Activated B cell treated with CpG ODN at 0.5 μM for 24 hours (primary cell): ENCODE measurements at regions of chr12 and their contacts with region 1.

Region 1: DNA sequence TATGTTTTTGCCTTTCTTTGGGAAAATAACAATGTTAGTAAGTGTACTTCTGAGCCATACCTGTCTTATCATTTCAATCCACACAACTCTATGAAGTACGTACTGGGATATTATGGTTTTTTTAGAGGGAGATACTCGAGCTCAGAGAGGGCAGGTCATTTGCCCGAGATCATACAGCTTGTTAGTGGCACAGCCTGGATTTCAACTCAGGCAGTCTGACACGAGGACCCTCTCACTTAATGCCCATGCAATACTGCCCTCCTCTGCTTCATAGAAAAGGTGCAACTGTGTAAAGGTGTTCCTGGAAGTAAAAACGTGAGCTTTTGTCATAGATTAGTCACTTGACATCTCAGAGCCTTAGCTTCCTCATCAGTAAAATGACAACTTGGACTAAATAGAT is 128.0 kb downstream of the NDUFA12 start:
- DNase-seq: no peak
- ATAC-seq: peak; percentile 74
- H3K4me3 Mint-ChIP-seq: peak overlapping the region; percentile 74
- H3K27ac Mint-ChIP-seq: peak overlapping the region; percentile 46
- H3K4me1 Mint-ChIP-seq: peaks cover 38% of the 10 kb centered on the region
- H3K27me3 Mint-ChIP-seq: peaks cover 37% of the 10 kb centered on the region
- CTCF ChIP-seq: no peak

Region 2: GRCh38 chr12:94133964-94134795 is 741.3 kb before region 1 on chr12:
- CTCF ChIA-PET with region 1: interaction called, 4 read pairs
- POLR2A ChIA-PET with region 1: no interaction called
- intact Hi-C with region 1: loop called (anchors 1 kb)
- DNase-seq: no peak
- ATAC-seq: peak; percentile 97
- H3K4me3 Mint-ChIP-seq: no peak overlapping the region
- H3K27ac Mint-ChIP-seq: no peak overlapping the region
- H3K4me1 Mint-ChIP-seq: peaks cover 9% of the 10 kb centered on the region
- H3K27me3 Mint-ChIP-seq: no peaks in the 10 kb centered on the region
- CTCF ChIP-seq: peak; percentile 19

Region 3: GRCh38 chr12:94262228-94263010 is 613.1 kb before region 1 on chr12:
- CTCF ChIA-PET with region 1: no interaction called
- POLR2A ChIA-PET with region 1: no interaction called
- intact Hi-C with region 1: no loop called
- DNase-seq: peak; percentile 63
- ATAC-seq: peak; percentile 82
- H3K4me3 Mint-ChIP-seq: peak overlapping the region; percentile 97
- H3K27ac Mint-ChIP-seq: peak overlapping the region; percentile 99
- H3K4me1 Mint-ChIP-seq: peaks cover 64% of the 10 kb centered on the region
- H3K27me3 Mint-ChIP-seq: no peaks in the 10 kb centered on the region
- CTCF ChIP-seq: no peak

Region 4: DNA sequence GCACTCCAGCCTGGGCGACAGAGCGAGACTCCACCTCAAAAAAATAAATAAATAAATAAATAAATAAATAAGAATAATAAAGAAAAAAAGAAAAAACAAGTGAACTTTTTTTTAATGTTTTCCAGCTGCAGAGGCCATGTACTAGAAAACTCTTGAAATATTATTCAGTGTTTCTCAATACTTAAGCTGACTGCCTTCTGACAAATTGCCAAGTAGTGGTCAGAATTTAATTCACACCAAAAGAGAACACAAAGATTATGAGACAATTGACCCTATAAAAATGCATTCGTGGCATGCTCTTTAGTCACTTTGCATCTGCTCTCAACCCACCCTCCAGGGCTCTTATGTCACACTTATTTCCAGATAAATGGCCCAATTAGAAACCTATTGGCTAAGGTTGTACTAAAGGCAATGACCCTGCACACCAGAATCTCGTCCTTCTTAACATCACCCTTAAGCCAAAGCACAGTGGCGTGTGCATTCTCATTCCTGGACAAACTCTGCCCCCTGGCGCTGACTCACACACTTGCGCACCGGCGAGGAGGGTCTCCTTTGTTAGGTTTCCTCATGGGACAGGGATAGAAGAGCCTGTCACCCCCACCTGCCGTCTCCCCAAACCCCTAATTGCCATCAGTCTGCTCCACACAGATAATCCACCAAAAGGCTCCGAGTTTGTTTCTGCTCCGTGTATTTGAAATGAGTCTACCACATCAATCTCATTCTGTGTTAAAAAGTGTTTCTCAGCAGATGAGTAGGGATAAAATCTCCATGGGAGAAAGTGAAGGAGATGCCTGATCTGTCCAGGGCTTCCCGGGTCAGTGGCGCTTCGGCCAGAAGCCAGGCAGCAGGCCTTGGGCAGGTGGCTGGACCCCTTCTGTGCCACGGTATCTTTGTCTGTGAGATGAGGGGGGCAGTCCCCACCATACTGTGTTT is 342.8 kb before region 1 on chr12:
- CTCF ChIA-PET with region 1: interaction called, 11 read pairs
- POLR2A ChIA-PET with region 1: no interaction called
- intact Hi-C with region 1: no loop called
- DNase-seq: peak; percentile 63
- ATAC-seq: peak; percentile 88
- H3K4me3 Mint-ChIP-seq: no peak overlapping the region
- H3K27ac Mint-ChIP-seq: no peak overlapping the region
- H3K4me1 Mint-ChIP-seq: peaks cover 5% of the 10 kb centered on the region
- H3K27me3 Mint-ChIP-seq: peaks cover 9% of the 10 kb centered on the region
- CTCF ChIP-seq: no peak

Region 5: GRCh38 chr12:94649349-94650142 is 226.0 kb before region 1 on chr12:
- CTCF ChIA-PET with region 1: interaction called, 3 read pairs
- POLR2A ChIA-PET with region 1: interaction called, 3 read pairs
- intact Hi-C with region 1: loop called (anchors 1 kb)
- DNase-seq: peak; percentile 55
- ATAC-seq: peak; percentile 69
- H3K4me3 Mint-ChIP-seq: peak overlapping the region; percentile 86
- H3K27ac Mint-ChIP-seq: no peak overlapping the region
- H3K4me1 Mint-ChIP-seq: peaks cover 29% of the 10 kb centered on the region
- H3K27me3 Mint-ChIP-seq: no peaks in the 10 kb centered on the region
- CTCF ChIP-seq: no peak

Region 6: GRCh38 chr12:94710933-94711332 is 164.6 kb before region 1 on chr12:
- CTCF ChIA-PET with region 1: interaction called, 58 read pairs
- POLR2A ChIA-PET with region 1: interaction called, 10 read pairs
- intact Hi-C with region 1: loop called (anchors 1 kb)
- DNase-seq: no peak
- ATAC-seq: peak; percentile 69
- H3K4me3 Mint-ChIP-seq: no peak overlapping the region
- H3K27ac Mint-ChIP-seq: no peak overlapping the region
- H3K4me1 Mint-ChIP-seq: peaks cover 32% of the 10 kb centered on the region
- H3K27me3 Mint-ChIP-seq: no peaks in the 10 kb centered on the region
- CTCF ChIP-seq: no peak

Region 7: DNA sequence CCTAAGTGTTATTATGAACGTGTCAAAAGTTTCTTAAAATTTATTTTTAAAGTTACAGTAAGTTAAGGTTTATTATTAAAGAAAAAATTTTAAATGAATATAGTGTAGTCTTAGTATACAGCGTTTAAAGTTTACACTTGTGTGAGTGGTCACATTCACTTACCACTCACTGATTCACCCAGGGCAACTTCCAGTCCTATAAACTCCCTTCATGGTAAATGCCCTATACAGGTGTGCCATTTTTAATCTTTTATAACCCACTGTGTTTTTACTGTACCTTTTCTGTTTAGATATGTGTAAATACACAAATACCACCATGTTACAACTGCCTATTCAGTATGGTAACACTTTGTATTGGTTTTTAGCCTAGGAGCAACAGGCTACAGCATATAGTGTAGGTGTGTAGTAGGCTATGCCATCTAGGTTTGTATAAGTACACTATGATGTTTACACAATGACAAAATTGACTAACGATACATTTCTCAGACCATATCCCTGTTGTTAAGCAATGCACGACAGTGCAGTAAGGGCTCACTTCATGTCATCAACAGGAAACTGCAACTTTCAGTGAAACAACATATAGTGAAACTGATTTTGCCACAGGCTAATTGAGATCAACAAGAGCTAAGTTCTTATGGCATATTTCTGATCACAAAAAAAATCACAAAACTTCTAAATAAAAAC is 113.1 kb before region 1 on chr12:
- CTCF ChIA-PET with region 1: interaction called, 11 read pairs
- POLR2A ChIA-PET with region 1: no interaction called
- intact Hi-C with region 1: no loop called
- DNase-seq: no peak
- ATAC-seq: peak; percentile 45
- H3K4me3 Mint-ChIP-seq: no peak overlapping the region
- H3K27ac Mint-ChIP-seq: peak overlapping the region; percentile 43
- H3K4me1 Mint-ChIP-seq: peaks cover 49% of the 10 kb centered on the region
- H3K27me3 Mint-ChIP-seq: no peaks in the 10 kb centered on the region
- CTCF ChIP-seq: no peak

Region 8: GRCh38 chr12:94831081-94831751 is 44.3 kb before region 1 on chr12:
- CTCF ChIA-PET with region 1: interaction called, 15 read pairs
- POLR2A ChIA-PET with region 1: interaction called, 22 read pairs
- intact Hi-C with region 1: loop called (anchors 1 kb)
- DNase-seq: peak; percentile 40
- ATAC-seq: peak; percentile 91
- H3K4me3 Mint-ChIP-seq: peak overlapping the region; percentile 81
- H3K27ac Mint-ChIP-seq: peak overlapping the region; percentile 99
- H3K4me1 Mint-ChIP-seq: peaks cover 58% of the 10 kb centered on the region
- H3K27me3 Mint-ChIP-seq: no peaks in the 10 kb centered on the region
- CTCF ChIP-seq: no peak

Region 9: DNA sequence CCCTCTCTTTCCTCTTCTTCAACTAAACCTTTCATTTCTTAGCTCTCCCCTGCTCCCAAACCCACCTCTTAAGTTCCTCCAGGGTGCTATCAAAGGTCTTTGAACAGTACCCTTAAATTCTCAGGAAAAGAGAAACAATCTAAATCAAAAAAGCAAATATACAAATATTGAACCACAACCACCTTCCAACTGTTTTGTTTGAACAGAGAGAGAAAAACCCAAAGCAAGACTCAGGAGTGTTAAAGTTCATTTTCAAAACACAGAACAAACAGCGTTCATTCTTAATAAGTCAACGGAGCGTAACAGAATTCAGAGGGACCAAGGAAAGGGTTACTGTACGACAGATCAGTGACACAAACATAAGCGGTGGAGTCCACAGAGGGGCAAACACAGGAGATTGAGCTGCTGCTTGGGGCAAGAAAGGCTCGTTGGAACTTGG is 54.7 kb after region 1 on chr12:
- CTCF ChIA-PET with region 1: no interaction called
- POLR2A ChIA-PET with region 1: no interaction called
- intact Hi-C with region 1: no loop called
- DNase-seq: no peak
- ATAC-seq: no peak
- H3K4me3 Mint-ChIP-seq: no peak overlapping the region
- H3K27ac Mint-ChIP-seq: no peak overlapping the region
- H3K4me1 Mint-ChIP-seq: no peaks in the 10 kb centered on the region
- H3K27me3 Mint-ChIP-seq: no peaks in the 10 kb centered on the region
- CTCF ChIP-seq: no peak